AG04449 (cell line): ENCODE measurements at regions of chr4 and their contacts with region 1.

Region 1: GRCh38 chr4:8468746-8469535 is 28.4 kb downstream of the TRMT44 start:
- DNase-seq: peak; percentile 7
- H3K4me3 ChIP-seq: no peak overlapping the region
- CTCF ChIP-seq: peak; percentile 98

Region 2: DNA sequence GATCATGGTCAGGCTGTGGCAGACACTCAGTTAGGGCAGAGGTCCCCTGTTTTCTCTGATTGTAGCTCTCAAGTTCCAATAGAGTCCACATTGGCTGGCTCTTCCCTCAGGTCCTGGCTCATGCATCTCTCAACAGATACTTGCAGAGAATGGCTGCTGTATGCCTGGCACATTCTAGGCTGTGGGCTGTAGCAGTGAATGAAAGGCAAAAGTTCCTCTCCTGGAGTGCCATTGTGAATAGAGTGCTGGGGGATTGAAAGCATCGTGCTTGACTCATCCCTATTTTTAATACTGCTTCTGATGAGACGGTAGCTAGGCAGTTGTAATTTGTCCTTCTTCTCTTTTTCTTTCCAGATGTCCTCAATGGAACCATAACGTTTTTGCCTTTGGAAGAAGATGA is 22.8 kb before region 1 on chr4:
- CTCF ChIA-PET with region 1: interaction called, 37 read pairs
- POLR2A ChIA-PET with region 1: no interaction called
- DNase-seq: no peak
- H3K4me3 ChIP-seq: no peak overlapping the region
- CTCF ChIP-seq: no peak

Region 3: DNA sequence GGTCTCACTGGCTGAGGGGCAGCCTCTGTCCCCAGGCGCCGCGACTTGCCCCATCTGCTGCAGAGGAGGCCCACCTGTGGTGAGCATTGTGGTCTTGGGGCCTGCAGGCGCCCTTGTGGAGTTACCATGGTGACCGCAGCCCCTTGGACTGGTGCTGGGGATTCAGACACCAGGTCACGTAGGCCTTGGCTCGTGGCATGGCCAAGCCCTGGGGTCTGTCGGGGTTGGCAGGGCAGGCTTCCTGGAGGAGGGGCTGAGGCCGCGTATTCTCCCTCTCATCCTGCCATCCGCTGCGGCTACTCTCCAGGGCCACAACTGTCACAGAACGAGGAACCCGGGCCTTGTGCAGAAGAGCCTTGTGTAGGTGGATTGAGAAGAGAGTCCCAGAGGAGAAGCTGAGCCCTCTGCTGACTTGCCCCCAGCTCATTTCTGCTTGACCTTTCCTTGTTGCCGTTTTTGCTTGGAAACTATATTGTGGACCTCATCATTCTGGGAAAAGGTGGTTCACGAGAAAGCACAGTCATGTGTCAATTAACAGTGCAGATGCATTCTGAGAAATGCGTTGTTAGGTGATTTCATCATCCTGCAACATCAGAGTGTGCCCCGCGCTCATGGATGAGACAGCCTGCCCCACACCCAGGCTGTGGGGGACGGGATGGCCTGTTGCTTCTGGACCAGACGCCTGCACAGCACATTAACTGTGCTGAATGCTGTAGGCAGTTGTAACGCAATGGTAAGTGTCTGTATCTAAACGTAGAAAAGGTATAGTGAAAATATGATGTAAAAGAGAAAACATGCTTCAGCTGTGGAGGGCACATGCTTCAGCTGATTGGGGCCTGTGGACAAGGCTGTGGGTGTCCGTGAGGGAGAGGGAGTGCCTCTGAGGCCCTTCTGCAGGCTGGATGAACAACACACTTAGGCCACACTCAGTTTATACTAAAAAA is 10.1 kb after region 1 on chr4:
- CTCF ChIA-PET with region 1: interaction called, 13 read pairs
- POLR2A ChIA-PET with region 1: no interaction called
- DNase-seq: no peak
- H3K4me3 ChIP-seq: no peak overlapping the region
- CTCF ChIP-seq: no peak

Region 4: GRCh38 chr4:8547108-8547970 is 78.4 kb after region 1 on chr4:
- CTCF ChIA-PET with region 1: interaction called, 20 read pairs
- POLR2A ChIA-PET with region 1: no interaction called
- DNase-seq: no peak
- H3K4me3 ChIP-seq: no peak overlapping the region
- CTCF ChIP-seq: peak; percentile 14

Region 5: DNA sequence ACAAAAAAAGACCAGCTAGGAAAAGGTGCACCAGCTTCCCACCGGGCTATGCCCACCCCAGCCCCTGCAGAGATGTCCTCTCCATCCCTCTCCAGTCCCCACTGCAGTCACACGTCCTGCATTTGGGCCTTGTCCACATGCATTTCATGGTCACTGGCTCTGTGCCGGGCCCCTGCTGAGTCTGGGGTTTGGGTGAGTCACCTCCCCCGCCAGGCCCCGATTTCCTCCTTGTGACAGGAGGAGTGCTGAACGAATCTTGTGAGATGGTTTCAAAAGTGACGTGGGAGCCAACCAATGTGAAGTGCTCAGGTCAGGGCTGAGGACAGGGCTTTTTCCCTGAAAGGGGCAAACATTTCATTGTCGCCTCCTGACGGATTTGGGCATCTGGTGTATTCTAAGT is 130.7 kb after region 1 on chr4:
- CTCF ChIA-PET with region 1: interaction called, 202 read pairs
- POLR2A ChIA-PET with region 1: no interaction called
- DNase-seq: peak; percentile 64
- H3K4me3 ChIP-seq: no peak overlapping the region
- CTCF ChIP-seq: no peak

Region 6: DNA sequence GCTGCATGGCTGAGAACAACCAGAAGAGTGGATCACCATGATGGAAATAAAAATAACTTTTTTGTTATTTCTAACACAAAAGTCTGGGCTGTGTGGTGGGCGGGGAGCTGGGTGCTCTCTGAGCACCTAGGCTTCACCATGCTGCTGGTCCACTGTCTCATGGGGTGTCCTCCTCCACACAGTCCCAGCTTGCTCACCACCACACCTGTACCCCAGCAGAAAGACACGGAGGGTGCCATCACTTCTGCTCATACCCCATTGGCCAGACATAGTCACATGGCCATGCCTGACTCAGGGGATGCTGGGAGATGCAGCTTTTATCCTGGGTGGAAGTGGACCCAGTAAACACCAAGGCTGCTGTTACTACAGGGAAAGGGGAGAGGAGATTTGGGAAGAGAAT is 168.6 kb after region 1 on chr4:
- CTCF ChIA-PET with region 1: interaction called, 12 read pairs
- POLR2A ChIA-PET with region 1: no interaction called
- DNase-seq: no peak
- H3K4me3 ChIP-seq: no peak overlapping the region
- CTCF ChIP-seq: no peak

Region 7: GRCh38 chr4:8837181-8837841 is 368.4 kb after region 1 on chr4:
- CTCF ChIA-PET with region 1: no interaction called
- POLR2A ChIA-PET with region 1: no interaction called
- DNase-seq: no peak
- H3K4me3 ChIP-seq: no peak overlapping the region
- CTCF ChIP-seq: no peak